CD4-positive, alpha-beta T cell (primary cell): ENCODE measurements at regions of chr14 and their contacts with region 1.

Region 1: GRCh38 chr14:89915114-89915878 is 39.2 kb downstream of the EFCAB11 start:
- DNase-seq: peak; percentile 33 to 77 (median 54)
- ATAC-seq: peak; percentile 72
- H3K4me3 ChIP-seq: no peak overlapping the region
- H3K4me3 Mint-ChIP-seq: no peak overlapping the region
- H3K27ac ChIP-seq: no peak overlapping the region
- H3K27ac Mint-ChIP-seq: no peak overlapping the region
- H3K4me1 ChIP-seq: no peaks in the 10 kb centered on the region
- H3K4me1 Mint-ChIP-seq: peaks cover 4% of the 10 kb centered on the region
- H3K27me3 ChIP-seq: no peaks in the 10 kb centered on the region
- H3K27me3 Mint-ChIP-seq: peaks cover 13% of the 10 kb centered on the region
- CTCF ChIP-seq: peak; percentile 98

Region 2: GRCh38 chr14:88492272-88493089 is 1422.8 kb before region 1 on chr14:
- CTCF ChIA-PET with region 1: no interaction called
- POLR2A ChIA-PET with region 1: no interaction called
- intact Hi-C with region 1: loop called in 1 of 2 experiments (anchors 5 kb)
- DNase-seq: peak; percentile 22 to 80 (median 47)
- ATAC-seq: peak; percentile 72
- H3K4me3 ChIP-seq: no peak overlapping the region
- H3K4me3 Mint-ChIP-seq: no peak overlapping the region
- H3K27ac ChIP-seq: no peak overlapping the region
- H3K27ac Mint-ChIP-seq: no peak overlapping the region
- H3K4me1 ChIP-seq: no peaks in the 10 kb centered on the region
- H3K4me1 Mint-ChIP-seq: no peaks in the 10 kb centered on the region
- H3K27me3 ChIP-seq: no peaks in the 10 kb centered on the region
- H3K27me3 Mint-ChIP-seq: peaks cover 5% of the 10 kb centered on the region
- CTCF ChIP-seq: peak; percentile 85

Region 3: DNA sequence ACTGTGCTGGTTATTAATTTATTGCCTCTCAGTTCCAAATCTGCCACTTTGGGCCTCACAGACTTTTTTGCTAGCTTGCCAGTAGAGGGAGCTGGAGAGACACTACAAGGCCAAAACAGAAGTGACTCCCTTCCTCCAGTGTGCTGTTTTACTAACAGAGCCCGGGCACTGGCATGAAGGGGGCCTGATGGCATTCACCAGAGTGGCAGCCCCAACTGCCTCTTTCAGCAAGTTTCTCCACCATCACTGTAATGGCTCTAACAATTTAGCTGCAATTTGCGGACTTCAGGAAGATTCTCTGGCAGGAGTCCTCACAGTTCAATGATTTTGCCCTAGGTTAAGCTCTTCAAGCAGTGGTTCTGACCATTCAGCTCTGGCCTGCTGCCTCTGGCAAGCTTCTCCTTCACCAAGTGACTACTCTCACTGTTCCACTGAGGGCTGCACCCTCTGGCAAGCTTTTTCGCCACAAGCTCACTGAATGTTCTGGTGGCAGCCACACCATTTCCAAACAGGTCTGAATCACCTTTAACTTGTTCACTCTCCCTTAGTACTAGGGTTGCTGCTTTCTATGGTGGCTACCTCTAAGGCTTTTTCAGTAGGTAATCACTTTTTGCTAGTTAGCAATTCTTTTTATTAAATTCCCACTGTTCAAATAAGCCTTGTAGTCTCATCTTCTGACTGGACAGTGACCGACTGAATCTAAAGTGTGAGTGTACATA is 1247.6 kb before region 1 on chr14:
- CTCF ChIA-PET with region 1: no interaction called
- POLR2A ChIA-PET with region 1: no interaction called
- intact Hi-C with region 1: loop called (anchors 1 to 5 kb)
- DNase-seq: peak in 13 of 14 experiments; percentile 2 to 79 (median 32)
- ATAC-seq: peak; percentile 65
- H3K4me3 ChIP-seq: no peak overlapping the region
- H3K4me3 Mint-ChIP-seq: no peak overlapping the region
- H3K27ac ChIP-seq: no peak overlapping the region
- H3K27ac Mint-ChIP-seq: no peak overlapping the region
- H3K4me1 ChIP-seq: peaks cover 4% of the 10 kb centered on the region
- H3K4me1 Mint-ChIP-seq: no peaks in the 10 kb centered on the region
- H3K27me3 ChIP-seq: no peaks in the 10 kb centered on the region
- H3K27me3 Mint-ChIP-seq: no peaks in the 10 kb centered on the region
- CTCF ChIP-seq: peak; percentile 81

Region 4: DNA sequence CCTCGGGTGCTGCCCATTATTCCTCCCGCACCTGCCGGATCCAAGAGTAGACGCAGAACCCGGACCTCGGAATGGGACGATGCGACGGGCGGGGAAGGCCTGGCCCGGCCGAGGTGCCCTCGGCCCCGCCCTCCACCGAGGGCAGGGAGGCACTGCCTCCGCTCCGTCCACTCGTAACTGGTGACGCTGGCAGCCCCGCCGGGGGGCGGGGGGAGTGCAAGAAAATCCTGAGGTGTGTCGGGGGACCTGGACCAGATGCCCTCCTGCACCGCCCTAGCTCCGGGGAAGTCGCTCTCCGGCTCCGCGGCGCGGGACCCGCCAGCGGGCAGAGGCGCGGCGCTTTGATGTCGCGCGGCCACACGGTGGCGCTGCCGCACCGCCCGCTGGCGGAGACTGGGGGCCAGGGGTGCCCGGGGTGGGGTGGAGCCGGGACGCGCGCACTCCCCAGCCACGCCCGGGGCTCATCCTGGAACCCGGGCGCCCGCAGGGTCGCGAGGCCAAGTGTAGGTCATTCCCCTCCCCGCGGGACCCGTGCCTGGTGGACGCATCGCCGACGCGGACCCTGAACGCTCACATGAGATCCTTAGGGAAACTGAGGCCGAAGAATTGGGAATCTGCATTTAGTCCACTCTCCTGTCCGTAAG is 888.1 kb before region 1 on chr14:
- CTCF ChIA-PET with region 1: interaction called, 3 read pairs
- POLR2A ChIA-PET with region 1: no interaction called
- intact Hi-C with region 1: loop called (anchors 1 kb)
- DNase-seq: peak; percentile 20 to 81 (median 50)
- ATAC-seq: peak; percentile 88
- H3K4me3 ChIP-seq: peak overlapping the region; percentile 51
- H3K4me3 Mint-ChIP-seq: peak overlapping the region; percentile 55
- H3K27ac ChIP-seq: no peak overlapping the region
- H3K27ac Mint-ChIP-seq: no peak overlapping the region
- H3K4me1 ChIP-seq: peaks cover 21% of the 10 kb centered on the region
- H3K4me1 Mint-ChIP-seq: peaks cover 10% of the 10 kb centered on the region
- H3K27me3 ChIP-seq: peaks cover 43 to 56% of the 10 kb centered on the region in 2 experiments
- H3K27me3 Mint-ChIP-seq: peaks cover 80% of the 10 kb centered on the region
- CTCF ChIP-seq: peak; percentile 64

Region 5: GRCh38 chr14:89040460-89041259 is 874.6 kb before region 1 on chr14:
- CTCF ChIA-PET with region 1: no interaction called
- POLR2A ChIA-PET with region 1: no interaction called
- intact Hi-C with region 1: loop called (anchors 1 kb)
- DNase-seq: peak; percentile 57 to 87 (median 76)
- ATAC-seq: peak; percentile 67
- H3K4me3 ChIP-seq: peak overlapping the region; percentile 49
- H3K4me3 Mint-ChIP-seq: peak overlapping the region; percentile 60
- H3K27ac ChIP-seq: no peak overlapping the region
- H3K27ac Mint-ChIP-seq: no peak overlapping the region
- H3K4me1 ChIP-seq: peaks cover 14% of the 10 kb centered on the region
- H3K4me1 Mint-ChIP-seq: peaks cover 15% of the 10 kb centered on the region
- H3K27me3 ChIP-seq: peaks cover 0 to 3% of the 10 kb centered on the region in 2 experiments
- H3K27me3 Mint-ChIP-seq: peaks cover 45% of the 10 kb centered on the region
- CTCF ChIP-seq: peak; percentile 98

Region 6: GRCh38 chr14:89178802-89179535 is 736.3 kb before region 1 on chr14:
- CTCF ChIA-PET with region 1: interaction called, 3 read pairs
- POLR2A ChIA-PET with region 1: no interaction called
- intact Hi-C with region 1: loop called (anchors 1 kb)
- DNase-seq: no peak
- ATAC-seq: no peak
- H3K4me3 ChIP-seq: no peak overlapping the region
- H3K4me3 Mint-ChIP-seq: no peak overlapping the region
- H3K27ac ChIP-seq: no peak overlapping the region
- H3K27ac Mint-ChIP-seq: peak overlapping the region; percentile 40
- H3K4me1 ChIP-seq: peaks cover 7% of the 10 kb centered on the region
- H3K4me1 Mint-ChIP-seq: peaks cover 35% of the 10 kb centered on the region
- H3K27me3 ChIP-seq: no peaks in the 10 kb centered on the region
- H3K27me3 Mint-ChIP-seq: no peaks in the 10 kb centered on the region
- CTCF ChIP-seq: no peak

Region 7: DNA sequence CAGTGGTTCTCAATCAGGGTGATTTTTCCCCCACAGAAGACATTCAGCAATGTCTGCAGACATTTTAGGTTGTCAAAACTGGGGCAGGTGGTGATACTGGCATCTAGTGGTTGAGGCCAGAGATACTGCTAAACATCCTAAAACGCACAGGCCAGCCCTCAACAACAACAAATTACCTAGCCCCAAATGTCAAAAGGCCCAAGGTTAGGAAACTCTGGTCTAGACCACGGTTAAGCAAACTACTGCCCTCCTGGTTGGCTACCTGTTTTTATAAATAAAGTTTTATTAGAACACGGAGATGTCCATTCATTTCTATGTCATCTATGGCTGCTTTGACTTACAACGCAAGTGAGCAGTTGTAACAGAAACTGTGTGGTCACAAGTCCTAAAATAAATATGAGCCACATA is 147.4 kb before region 1 on chr14:
- CTCF ChIA-PET with region 1: no interaction called
- POLR2A ChIA-PET with region 1: no interaction called
- intact Hi-C with region 1: loop called in 1 of 2 experiments (anchors 10 kb)
- DNase-seq: peak; percentile 46 to 86 (median 57)
- ATAC-seq: peak; percentile 96
- H3K4me3 ChIP-seq: no peak overlapping the region
- H3K4me3 Mint-ChIP-seq: peak overlapping the region; percentile 52
- H3K27ac ChIP-seq: no peak overlapping the region
- H3K27ac Mint-ChIP-seq: peak overlapping the region; percentile 52
- H3K4me1 ChIP-seq: peaks cover 21% of the 10 kb centered on the region
- H3K4me1 Mint-ChIP-seq: peaks cover 43% of the 10 kb centered on the region
- H3K27me3 ChIP-seq: no peaks in the 10 kb centered on the region
- H3K27me3 Mint-ChIP-seq: no peaks in the 10 kb centered on the region
- CTCF ChIP-seq: peak; percentile 82